Cardiac septum (tissue), 1 donor: ENCODE measurements at regions of chr6 and their contacts with region 1.

Region 1: DNA sequence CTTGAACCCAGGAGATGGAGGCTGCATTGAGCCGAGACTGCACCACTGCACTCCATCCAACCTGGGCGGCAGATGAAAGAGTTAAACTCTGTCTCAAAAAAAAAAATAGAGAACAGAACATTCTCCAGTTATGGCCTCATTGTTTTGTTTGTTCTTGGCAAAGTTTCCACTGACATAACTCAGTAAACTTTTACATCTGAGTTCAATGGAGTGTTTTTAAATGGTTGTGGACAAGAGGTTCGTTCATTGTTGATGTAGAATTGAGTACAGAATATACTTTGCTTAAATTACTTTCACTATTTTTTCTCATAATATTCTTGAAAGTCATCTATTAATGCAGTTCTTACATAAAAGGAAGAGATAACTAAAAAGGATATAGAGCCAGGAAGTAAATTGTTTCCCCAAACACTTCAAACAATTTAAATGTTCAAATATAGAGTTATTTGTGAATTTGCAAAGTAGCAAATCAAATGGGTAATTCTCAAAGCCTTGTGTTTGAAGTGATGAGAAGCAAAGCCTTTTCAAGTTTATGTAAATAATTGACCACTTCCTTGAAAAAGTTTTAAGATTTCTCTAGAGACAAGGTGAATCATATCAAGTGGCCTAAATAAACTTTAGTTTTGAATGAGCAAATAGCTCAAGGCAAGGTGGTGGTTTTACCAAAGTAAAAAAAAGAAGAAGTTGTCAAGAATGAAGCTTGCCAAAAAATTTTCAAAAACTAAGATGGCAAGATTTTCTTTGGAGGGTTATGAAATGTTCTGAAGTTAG is 42.4 kb upstream of the IFNGR1 start:
- DNase-seq: no peak

Region 2: GRCh38 chr6:137001299-137001976 is 260.1 kb before region 1 on chr6:
- intact Hi-C with region 1: no loop called
- DNase-seq: no peak

Region 3: DNA sequence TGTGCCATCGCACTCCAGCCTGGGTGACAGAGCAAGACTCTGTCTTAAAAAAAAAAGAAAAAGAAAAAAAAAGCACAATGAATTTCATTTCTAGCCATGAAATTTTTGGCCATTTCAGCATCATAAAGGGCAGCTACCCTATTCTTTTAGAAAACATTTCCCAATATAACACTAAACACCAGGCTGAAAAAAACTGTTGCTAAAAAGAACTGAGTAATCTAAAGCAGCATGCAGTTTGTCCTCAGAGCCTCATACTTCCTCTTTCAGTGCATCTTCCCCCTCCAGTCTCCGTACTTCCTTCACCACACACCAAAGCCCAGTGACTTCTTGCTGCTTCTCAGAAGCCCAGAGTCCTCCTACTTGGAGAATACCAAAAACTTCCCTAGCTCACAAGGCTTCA is 36.8 kb before region 1 on chr6:
- intact Hi-C with region 1: loop called (anchors 5 kb)
- DNase-seq: no peak